Dorsolateral prefrontal cortex (tissue), 120 donors: ENCODE measurements at regions of chr11 and their contacts with region 1.

Region 1: GRCh38 chr11:86671682-86672621 is at the start of gene ME3:
- DNase-seq: peak; percentile 38 to 76 (median 68)
- H3K4me3 ChIP-seq: peak within 1 kb of the TSS; percentile 55 to 95 (median 82)
- H3K27ac ChIP-seq: peak within 1 kb of the TSS in 58 of 59 donors; percentile 30 to 96 (median 88)
- H3K27me3 ChIP-seq: no peaks in the 10 kb centered on the region
- CTCF ChIP-seq: peak in 3 of 56 donors; percentile 3 to 29 (median 5)
- total RNA-seq, gene ME3: 29.7 to 94.4 (median 68.3) TPM

Region 2: DNA sequence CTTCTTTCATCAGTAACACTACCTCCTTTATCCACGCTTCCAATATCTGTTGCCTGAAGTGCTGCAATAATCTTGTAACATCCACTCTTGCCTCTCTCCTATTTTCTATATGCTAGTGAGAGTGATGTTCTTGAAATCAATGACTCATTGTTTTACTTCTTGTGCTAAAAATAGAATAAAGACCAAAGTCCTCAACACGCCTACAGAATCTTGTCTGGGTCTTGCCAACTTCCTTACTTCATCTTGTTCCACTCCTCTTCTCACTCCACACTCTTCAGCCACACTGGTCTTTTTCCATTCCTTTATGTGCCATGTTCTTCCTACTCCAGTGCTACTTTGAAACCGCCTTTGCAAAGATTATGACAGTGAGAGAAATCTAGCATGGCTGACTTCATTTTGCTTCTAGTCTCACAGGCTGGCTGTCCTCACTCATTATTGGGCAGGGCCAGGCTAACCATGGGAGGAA is 160.8 kb before region 1 on chr11:
- intact Hi-C with region 1: no loop called
- DNase-seq: no peak
- H3K4me3 ChIP-seq: no peak overlapping the region
- H3K27ac ChIP-seq: peak overlapping the region in 31 of 59 donors; percentile 1 to 77 (median 49)
- H3K27me3 ChIP-seq: no peaks in the 10 kb centered on the region
- CTCF ChIP-seq: no peak

Region 3: GRCh38 chr11:86644291-86644690 is 27.7 kb before region 1 on chr11:
- intact Hi-C with region 1: no loop called
- DNase-seq: no peak
- H3K4me3 ChIP-seq: no peak overlapping the region
- H3K27ac ChIP-seq: no peak overlapping the region
- H3K27me3 ChIP-seq: no peaks in the 10 kb centered on the region
- CTCF ChIP-seq: no peak

Region 4: DNA sequence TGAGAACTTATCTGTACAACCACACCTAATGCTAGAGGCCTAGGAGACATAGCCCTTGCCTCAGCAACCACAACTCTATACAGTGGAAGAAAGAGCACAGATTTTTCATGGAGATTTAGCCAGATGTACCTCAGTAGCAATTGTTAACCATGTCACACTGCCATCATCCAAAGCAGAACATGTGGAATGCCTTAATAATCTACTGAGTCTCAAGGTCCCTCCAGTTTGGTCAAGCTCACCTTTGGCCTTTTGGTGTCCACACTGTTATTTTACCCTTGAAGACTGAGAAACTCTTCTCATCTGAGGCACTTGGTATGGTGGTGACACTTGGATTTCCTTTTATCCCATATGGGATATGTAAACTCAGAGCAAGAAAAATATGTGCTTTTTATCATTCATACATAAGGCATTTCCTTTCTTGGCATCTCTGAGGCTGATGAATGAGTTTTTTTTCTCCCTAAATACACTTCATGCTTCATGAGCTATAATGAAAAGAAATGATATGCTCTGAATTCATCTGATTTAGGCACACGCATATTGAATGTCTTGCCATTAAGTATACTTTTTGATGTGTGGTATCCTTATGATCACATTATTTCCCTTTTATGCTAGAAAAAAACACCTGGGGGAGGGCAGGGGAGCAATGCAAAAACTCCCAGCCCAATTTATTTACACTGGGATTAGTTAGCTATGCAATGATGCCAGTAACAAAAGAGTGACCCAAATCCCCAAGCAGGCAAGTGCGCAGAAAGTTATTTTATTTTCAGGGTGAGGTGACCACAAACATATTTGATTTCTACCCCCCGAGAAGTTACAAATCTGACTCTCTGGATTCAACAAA is 63.7 kb after region 1 on chr11:
- intact Hi-C with region 1: no loop called
- DNase-seq: no peak
- H3K4me3 ChIP-seq: no peak overlapping the region
- H3K27ac ChIP-seq: no peak overlapping the region
- H3K27me3 ChIP-seq: no peaks in the 10 kb centered on the region
- CTCF ChIP-seq: no peak

Region 5: GRCh38 chr11:86802601-86803051 is 130.7 kb after region 1 on chr11:
- intact Hi-C with region 1: loop called (anchors 5 to 10 kb)
- DNase-seq: no peak
- H3K4me3 ChIP-seq: peak overlapping the region in 27 of 59 donors; percentile 1 to 79 (median 67)
- H3K27ac ChIP-seq: peak overlapping the region in 1 of 59 donors; percentile 25
- H3K27me3 ChIP-seq: peaks cover 0 to 34% (median 0%) of the 10 kb centered on the region in 45 donors
- CTCF ChIP-seq: peak; percentile 18 to 64 (median 47)